HEK293 (cell line): ENCODE measurements at regions of chr15 and their contacts with region 1.

Region 1: DNA sequence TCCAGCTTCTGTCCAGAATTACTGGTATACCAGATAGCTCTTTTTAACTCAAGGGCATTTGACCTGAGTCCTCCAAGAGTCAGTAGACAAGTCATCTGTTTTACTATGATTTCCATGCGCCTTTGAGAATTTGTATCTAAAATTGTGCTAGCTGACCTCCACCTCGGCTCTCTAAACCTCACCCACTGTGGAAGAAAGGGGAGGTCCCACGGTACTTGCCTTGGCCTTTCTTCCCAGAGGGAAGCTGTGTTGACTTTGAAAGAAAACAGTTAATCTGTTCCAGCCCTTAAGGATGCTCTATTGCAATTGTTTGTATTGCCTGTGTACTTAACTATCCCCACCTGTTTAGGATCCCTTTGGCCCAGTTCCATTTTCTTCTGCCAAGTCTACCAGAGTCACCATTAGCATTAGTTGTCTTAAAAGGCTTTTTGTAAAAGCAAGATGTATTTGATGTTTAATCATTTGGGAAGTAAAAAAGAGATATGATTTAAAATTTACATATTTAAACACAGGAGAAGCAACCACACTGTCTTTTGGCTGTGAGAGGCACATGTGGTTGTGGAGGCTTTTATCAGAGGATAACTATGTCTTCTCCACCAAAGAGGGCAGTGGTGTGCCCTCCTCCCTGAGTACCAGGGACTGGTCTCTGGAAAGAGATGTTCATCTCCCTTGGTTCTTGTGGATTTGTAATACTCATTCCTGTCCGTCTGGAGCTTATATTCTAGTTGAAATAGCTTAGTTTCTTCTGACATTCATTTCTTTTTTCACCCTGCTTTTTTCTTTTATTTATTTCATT is 88.8 kb downstream of the CRTC3 start:
- H3K4me3 ChIP-seq: no peak overlapping the region
- H3K27ac ChIP-seq: no peak overlapping the region
- H3K4me1 ChIP-seq: no peaks in the 10 kb centered on the region
- CTCF ChIP-seq: no peak

Region 2: GRCh38 chr15:90603893-90604292 is 14.6 kb before region 1 on chr15:
- CTCF ChIA-PET with region 1: interaction called, 10 read pairs
- POLR2A ChIA-PET with region 1: no interaction called
- H3K4me3 ChIP-seq: no peak overlapping the region
- H3K27ac ChIP-seq: no peak overlapping the region
- H3K4me1 ChIP-seq: no peaks in the 10 kb centered on the region; the same call in 1 of the 2 replicates
- CTCF ChIP-seq: no peak

Region 3: GRCh38 chr15:90633360-90633759 is 14.8 kb after region 1 on chr15:
- CTCF ChIA-PET with region 1: no interaction called
- POLR2A ChIA-PET with region 1: no interaction called
- H3K4me3 ChIP-seq: no peak overlapping the region
- H3K27ac ChIP-seq: no peak overlapping the region
- H3K4me1 ChIP-seq: no peaks in the 10 kb centered on the region
- CTCF ChIP-seq: no peak